ENCODE measurements at regions of chr2 and their contacts with region 1.

Region 1: GRCh38 chr2:166025313-166025712 is 71.7 kb upstream of the TTC21B start:
- DNase-seq: no peak
- ATAC-seq: no peak

Region 2: GRCh38 chr2:165953655-165954606 is 71.4 kb before region 1 on chr2 and contains the start of gene TTC21B:
- intact Hi-C with region 1: no loop called
- DNase-seq: peak; percentile 97
- ATAC-seq: peak; percentile 100
- total RNA-seq, gene TTC21B: 36.8 TPM

Region 3: DNA sequence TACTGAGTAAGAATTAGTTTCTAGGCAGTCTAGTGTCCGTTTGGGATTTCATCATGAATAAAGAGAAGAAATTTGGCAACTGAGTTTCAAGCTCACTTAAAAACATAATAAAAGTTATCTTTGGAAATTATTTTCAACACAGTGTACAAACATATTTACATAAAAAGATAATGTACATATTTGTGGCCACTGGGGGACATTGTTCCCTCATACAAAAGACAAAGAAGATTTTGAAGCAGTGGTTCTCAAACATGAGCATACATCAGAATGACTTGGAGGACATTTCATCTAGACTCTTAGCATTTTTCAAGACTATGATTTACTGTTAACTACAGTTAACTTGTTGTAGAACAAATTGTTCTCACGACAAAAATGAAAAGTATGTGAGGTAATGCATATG is 56.1 kb before region 1 on chr2:
- intact Hi-C with region 1: loop called (anchors 10 kb)
- DNase-seq: no peak
- ATAC-seq: no peak

Measured in sciatic nerve (tissue), 2 donors.